B cell (primary cell): ENCODE measurements at regions of chr6 and their contacts with region 1.

Region 1: DNA sequence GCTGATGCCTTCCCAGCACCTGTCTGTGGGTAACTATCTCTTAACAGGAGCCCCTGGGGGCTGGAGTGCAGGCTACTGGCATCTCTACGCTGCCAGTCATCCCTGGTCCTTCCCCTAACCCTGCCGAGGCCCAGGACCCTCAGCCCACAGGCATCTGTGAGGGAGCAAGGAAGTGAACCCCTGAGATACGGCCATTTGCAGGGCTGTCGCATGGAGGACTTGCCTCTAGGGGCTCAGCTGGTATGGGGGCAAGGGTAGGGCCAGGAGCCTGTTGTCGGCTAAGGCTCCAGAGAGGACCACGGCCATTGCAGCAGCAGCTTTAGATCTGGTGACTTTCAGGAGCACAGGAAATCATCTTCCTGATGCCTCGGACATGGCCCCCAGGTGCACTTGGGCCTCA is 49.7 kb downstream of the MAP3K4 start:
- DNase-seq: no peak
- ATAC-seq: no peak
- H3K4me3 ChIP-seq: no peak overlapping the region
- H3K4me3 Mint-ChIP-seq: no peak overlapping the region
- H3K27ac ChIP-seq: no peak overlapping the region
- H3K27ac Mint-ChIP-seq: no peak overlapping the region
- H3K4me1 ChIP-seq: no peaks in the 10 kb centered on the region
- H3K4me1 Mint-ChIP-seq: peaks cover 4% of the 10 kb centered on the region
- H3K27me3 ChIP-seq: no peaks in the 10 kb centered on the region
- H3K27me3 Mint-ChIP-seq: no peaks in the 10 kb centered on the region
- CTCF ChIP-seq: no peak

Region 2: DNA sequence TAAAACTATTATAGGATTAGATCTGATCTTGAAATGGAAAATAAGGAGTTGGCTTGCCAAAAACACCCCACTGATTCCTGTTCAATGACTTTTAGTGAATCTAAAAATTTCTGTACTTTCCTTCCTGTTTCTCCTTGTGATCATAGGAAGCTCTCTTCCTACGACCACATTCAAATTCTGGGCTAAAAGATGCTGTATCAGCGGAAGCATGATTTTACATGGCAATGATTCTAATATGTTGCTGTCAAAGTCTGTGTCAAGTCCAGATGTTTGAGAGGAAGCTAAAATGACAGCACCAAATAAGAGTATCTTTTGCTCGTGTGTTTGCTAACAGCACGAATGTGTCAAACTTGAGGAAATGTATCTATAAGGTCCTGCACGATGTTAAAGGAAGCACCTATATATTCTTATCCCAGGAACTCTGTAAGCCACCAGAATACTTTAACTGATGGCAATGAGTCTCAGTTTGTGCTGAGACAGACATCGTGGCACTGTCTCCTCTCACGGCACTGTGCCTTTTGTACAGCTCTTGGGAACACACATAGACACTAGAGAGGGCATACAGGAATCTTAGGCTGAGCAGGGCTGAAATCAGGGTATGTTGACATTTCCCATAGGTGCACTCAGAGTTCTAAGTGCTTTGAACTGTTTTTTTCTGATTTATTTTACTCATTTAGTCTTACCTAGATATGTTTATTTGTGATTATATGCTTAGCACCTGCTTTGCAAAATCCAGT is 74.6 kb before region 1 on chr6:
- CTCF ChIA-PET with region 1: no interaction called
- POLR2A ChIA-PET with region 1: interaction called, 10 read pairs
- intact Hi-C with region 1: no loop called
- DNase-seq: no peak
- ATAC-seq: no peak
- H3K4me3 ChIP-seq: no peak overlapping the region
- H3K4me3 Mint-ChIP-seq: no peak overlapping the region
- H3K27ac ChIP-seq: no peak overlapping the region
- H3K27ac Mint-ChIP-seq: no peak overlapping the region
- H3K4me1 ChIP-seq: no peaks in the 10 kb centered on the region
- H3K4me1 Mint-ChIP-seq: no peaks in the 10 kb centered on the region
- H3K27me3 ChIP-seq: peaks cover 0 to 2% (median 0%) of the 10 kb centered on the region in 4 experiments
- H3K27me3 Mint-ChIP-seq: peaks cover 24% of the 10 kb centered on the region
- CTCF ChIP-seq: no peak